Natural killer cell (primary cell): ENCODE measurements at regions of chr1 and their contacts with region 1.

Region 1: GRCh38 chr1:174022080-174022975 is at the start of gene RC3H1:
- DNase-seq: peak; percentile 87 to 93
- ATAC-seq: peak; percentile 91 to 97 (median 91)
- H3K4me3 ChIP-seq: peak within 1 kb of the TSS; percentile 71
- H3K4me3 Mint-ChIP-seq: peak within 1 kb of the TSS; percentile 99
- H3K27ac ChIP-seq: peak within 1 kb of the TSS; percentile 90
- H3K27ac Mint-ChIP-seq: peak within 1 kb of the TSS; percentile 93 to 98
- H3K4me1 ChIP-seq: peaks cover 14% of the 10 kb centered on the region
- H3K4me1 Mint-ChIP-seq: peaks cover 43 to 55% of the 10 kb centered on the region in 2 donors
- H3K27me3 ChIP-seq: no peaks in the 10 kb centered on the region
- H3K27me3 Mint-ChIP-seq: no peaks in the 10 kb centered on the region
- CTCF ChIP-seq: no peak
- total RNA-seq, gene RC3H1: 67.8 to 82.1 (median 78.9) TPM

Region 2: DNA sequence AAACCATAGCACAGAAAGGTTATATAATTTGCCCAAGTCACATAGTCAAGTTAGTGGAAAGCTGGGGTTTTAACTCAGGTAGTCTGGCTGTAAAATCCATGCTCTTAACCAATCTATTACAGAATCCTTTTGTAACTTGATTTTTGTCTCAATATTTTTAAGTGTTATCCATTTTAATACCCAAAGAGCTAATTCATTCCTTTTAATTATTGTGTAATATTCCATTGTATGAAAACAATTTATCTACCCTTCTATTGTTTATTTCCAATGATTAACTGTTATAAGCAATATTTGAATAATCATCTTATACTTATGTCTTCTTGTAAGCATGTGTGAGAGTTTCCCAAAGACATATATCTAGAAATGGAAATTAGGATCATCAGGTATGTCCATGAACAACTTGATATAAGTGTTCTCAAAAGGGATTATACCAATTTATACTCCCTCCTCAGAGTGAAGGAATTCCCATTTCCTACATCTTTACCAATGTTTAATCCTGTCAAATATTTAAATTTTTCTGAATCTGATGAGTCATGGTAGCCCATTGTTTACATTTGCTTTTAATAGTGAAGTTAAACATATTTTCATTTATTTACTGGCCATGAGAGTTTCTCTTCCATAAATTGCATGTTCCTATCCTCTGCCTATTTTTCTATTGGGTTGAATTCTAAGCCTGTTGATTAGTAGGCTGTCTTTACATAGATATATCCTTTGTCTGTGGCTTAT is 373.3 kb before region 1 on chr1:
- intact Hi-C with region 1: no loop called
- DNase-seq: no peak
- ATAC-seq: no peak
- H3K4me3 ChIP-seq: no peak overlapping the region
- H3K4me3 Mint-ChIP-seq: no peak overlapping the region
- H3K27ac ChIP-seq: no peak overlapping the region
- H3K27ac Mint-ChIP-seq: no peak overlapping the region
- H3K4me1 ChIP-seq: no peaks in the 10 kb centered on the region
- H3K4me1 Mint-ChIP-seq: peaks cover 0 to 5% of the 10 kb centered on the region in 2 donors
- H3K27me3 ChIP-seq: no peaks in the 10 kb centered on the region
- H3K27me3 Mint-ChIP-seq: peaks cover 14 to 35% of the 10 kb centered on the region in 2 donors
- CTCF ChIP-seq: no peak

Region 3: DNA sequence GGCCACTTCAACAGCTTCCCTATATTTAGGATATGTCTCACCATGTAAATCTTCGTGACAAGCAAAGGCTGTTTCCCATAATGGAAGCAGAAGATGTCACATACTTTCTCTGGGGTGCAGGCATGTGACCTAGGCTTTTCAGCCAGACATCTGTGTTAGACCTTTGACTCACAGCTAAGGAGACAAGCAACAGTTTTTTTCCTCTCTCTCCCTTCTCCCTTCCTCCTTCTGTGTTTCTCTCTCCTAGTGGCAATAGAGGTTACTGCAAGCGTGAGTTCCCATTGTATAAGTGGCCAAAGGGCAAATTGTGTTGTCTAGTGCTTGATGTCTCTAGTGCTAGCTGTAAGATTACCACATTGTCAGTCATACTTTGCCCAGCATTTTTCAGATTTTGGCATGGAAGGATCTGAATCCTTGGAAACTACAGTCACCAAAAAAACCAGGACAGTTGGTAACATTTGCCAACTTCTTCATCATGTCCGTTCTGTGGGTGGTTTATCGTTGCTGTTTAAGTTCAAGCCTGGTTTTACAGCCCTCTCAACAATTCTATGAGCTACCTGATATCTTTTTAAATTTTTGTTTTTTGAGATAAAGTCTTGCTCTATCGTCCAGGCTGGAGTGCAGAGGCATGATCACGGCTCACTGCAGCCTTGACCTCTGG is 92.6 kb after region 1 on chr1:
- intact Hi-C with region 1: no loop called
- DNase-seq: peak in 1 of 2 donors; percentile 64
- ATAC-seq: peak; percentile 67 to 74 (median 71)
- H3K4me3 ChIP-seq: no peak overlapping the region
- H3K4me3 Mint-ChIP-seq: no peak overlapping the region
- H3K27ac ChIP-seq: no peak overlapping the region
- H3K27ac Mint-ChIP-seq: no peak overlapping the region
- H3K4me1 ChIP-seq: no peaks in the 10 kb centered on the region
- H3K4me1 Mint-ChIP-seq: no peaks in the 10 kb centered on the region
- H3K27me3 ChIP-seq: no peaks in the 10 kb centered on the region
- H3K27me3 Mint-ChIP-seq: no peaks in the 10 kb centered on the region
- CTCF ChIP-seq: peak; percentile 79

Region 4: DNA sequence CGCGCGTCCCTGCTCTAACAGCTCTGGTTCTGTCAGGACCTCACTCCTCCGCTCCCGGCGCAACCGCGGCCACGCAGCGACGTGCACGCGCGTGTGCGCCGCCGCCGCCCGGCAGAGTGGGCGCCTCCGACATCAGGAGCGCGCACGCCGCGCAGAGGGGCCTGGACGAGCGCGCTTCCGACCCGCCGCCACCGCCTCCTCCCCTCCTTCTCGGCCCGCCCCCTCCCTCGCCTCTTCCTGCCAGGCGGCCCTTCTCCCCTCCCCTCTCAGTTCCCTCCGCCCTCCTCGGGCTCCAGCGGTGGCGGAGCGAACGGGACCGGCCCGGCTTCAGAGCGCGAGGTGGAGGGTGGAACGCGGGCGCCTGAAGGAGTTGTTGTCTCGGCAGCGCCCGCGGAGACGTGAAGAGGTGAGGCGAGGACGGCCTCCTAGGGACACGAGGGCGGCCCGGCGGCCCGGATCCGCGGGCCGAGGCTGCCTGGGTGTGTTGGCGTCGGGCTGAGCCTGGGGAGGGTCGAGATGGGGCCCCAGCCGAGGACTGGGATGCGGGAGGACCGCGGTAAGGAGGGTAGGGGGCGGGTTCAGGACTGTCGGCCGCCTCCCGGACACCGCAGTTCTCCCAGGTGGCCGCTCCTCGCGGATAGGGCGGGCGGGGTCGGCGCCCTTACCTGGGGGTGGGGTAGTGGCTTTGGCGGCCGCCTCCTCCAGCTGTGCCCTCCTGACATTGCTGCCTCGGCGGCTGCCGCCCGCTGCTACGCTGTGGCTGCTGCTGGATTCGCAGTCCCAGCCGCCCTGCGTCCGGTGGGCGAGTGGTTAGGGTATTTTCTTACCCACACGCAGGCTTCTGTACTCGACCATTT is 137.2 kb after region 1 on chr1 and contains the start of gene RABGAP1L:
- intact Hi-C with region 1: loop called (anchors 5 kb)
- DNase-seq: peak; percentile 87 to 98
- ATAC-seq: peak; percentile 88 to 96 (median 88)
- H3K4me3 ChIP-seq: peak within 1 kb of the TSS; percentile 81
- H3K4me3 Mint-ChIP-seq: peak within 1 kb of the TSS; percentile 92
- H3K27ac ChIP-seq: peak within 1 kb of the TSS; percentile 93
- H3K27ac Mint-ChIP-seq: peak within 1 kb of the TSS; percentile 86 to 98
- H3K4me1 ChIP-seq: peaks cover 22% of the 10 kb centered on the region
- H3K4me1 Mint-ChIP-seq: peaks cover 34 to 60% of the 10 kb centered on the region in 2 donors
- H3K27me3 ChIP-seq: no peaks in the 10 kb centered on the region
- H3K27me3 Mint-ChIP-seq: no peaks in the 10 kb centered on the region
- CTCF ChIP-seq: no peak
- total RNA-seq, gene RABGAP1L: 145 to 168 (median 153) TPM

Region 5: GRCh38 chr1:174217787-174218574 is 195.7 kb after region 1 on chr1:
- intact Hi-C with region 1: loop called (anchors 5 kb)
- DNase-seq: peak in 1 of 2 donors; percentile 70
- ATAC-seq: peak; percentile 70 to 82 (median 73)
- H3K4me3 ChIP-seq: no peak overlapping the region
- H3K4me3 Mint-ChIP-seq: no peak overlapping the region
- H3K27ac ChIP-seq: no peak overlapping the region
- H3K27ac Mint-ChIP-seq: no peak overlapping the region
- H3K4me1 ChIP-seq: no peaks in the 10 kb centered on the region
- H3K4me1 Mint-ChIP-seq: peaks cover 3 to 11% of the 10 kb centered on the region in 2 donors
- H3K27me3 ChIP-seq: no peaks in the 10 kb centered on the region
- H3K27me3 Mint-ChIP-seq: no peaks in the 10 kb centered on the region
- CTCF ChIP-seq: peak; percentile 82

Region 6: DNA sequence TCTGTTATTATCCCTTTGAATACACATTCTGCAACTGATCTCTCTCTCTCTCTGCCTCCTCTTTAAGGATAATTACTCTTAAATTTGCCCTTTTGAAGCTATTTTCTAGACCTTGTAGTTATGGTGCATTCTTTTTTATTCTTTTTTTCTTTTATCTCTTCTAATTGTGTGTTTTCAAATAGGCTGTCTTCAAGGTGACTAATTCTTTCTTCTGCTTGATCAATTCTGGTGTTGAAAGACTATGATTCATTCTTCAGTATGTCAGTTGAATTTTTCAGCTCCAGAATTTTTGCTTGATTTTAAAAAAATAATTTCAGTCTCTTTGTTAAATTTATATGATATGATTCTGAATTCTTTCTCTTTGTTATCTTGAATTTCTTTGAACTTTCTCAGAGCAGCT is 329.8 kb after region 1 on chr1:
- intact Hi-C with region 1: no loop called
- DNase-seq: no peak
- ATAC-seq: no peak
- H3K4me3 ChIP-seq: no peak overlapping the region
- H3K4me3 Mint-ChIP-seq: no peak overlapping the region
- H3K27ac ChIP-seq: no peak overlapping the region
- H3K27ac Mint-ChIP-seq: peak overlapping the region; percentile 11 to 43
- H3K4me1 ChIP-seq: no peaks in the 10 kb centered on the region
- H3K4me1 Mint-ChIP-seq: peaks cover 28 to 33% of the 10 kb centered on the region in 2 donors
- H3K27me3 ChIP-seq: no peaks in the 10 kb centered on the region
- H3K27me3 Mint-ChIP-seq: no peaks in the 10 kb centered on the region
- CTCF ChIP-seq: no peak

Region 7: GRCh38 chr1:174968750-174969244 is 946.5 kb after region 1 on chr1:
- intact Hi-C with region 1: loop called (anchors 10 kb)
- DNase-seq: peak in 1 of 2 donors; percentile 89
- ATAC-seq: peak; percentile 36 to 65 (median 53)
- H3K4me3 ChIP-seq: no peak overlapping the region
- H3K4me3 Mint-ChIP-seq: peak overlapping the region; percentile 88
- H3K27ac ChIP-seq: peak overlapping the region; percentile 67
- H3K27ac Mint-ChIP-seq: peak overlapping the region; percentile 90 to 99
- H3K4me1 ChIP-seq: peaks cover 39% of the 10 kb centered on the region
- H3K4me1 Mint-ChIP-seq: peaks cover 73 to 76% of the 10 kb centered on the region in 2 donors
- H3K27me3 ChIP-seq: no peaks in the 10 kb centered on the region
- H3K27me3 Mint-ChIP-seq: no peaks in the 10 kb centered on the region
- CTCF ChIP-seq: no peak